Caco-2 (cell line): ENCODE measurements at regions of chr16 and their contacts with region 1.

Region 1: GRCh38 chr16:74466872-74467271 is 45.6 kb upstream of the CLEC18B start:
- DNase-seq: no peak
- H3K4me3 ChIP-seq: no peak overlapping the region
- H3K4me3 Mint-ChIP-seq: no peak overlapping the region
- H3K27ac Mint-ChIP-seq: no peak overlapping the region
- H3K4me1 ChIP-seq: peaks cover 15% of the 10 kb centered on the region
- H3K4me1 Mint-ChIP-seq: peaks cover 11% of the 10 kb centered on the region
- H3K27me3 ChIP-seq: no peaks in the 10 kb centered on the region
- H3K27me3 Mint-ChIP-seq: no peaks in the 10 kb centered on the region
- CTCF ChIP-seq: no peak

Region 2: GRCh38 chr16:74477226-74477625 is 10.4 kb after region 1 on chr16:
- CTCF ChIA-PET with region 1: no interaction called
- POLR2A ChIA-PET with region 1: no interaction called
- intact Hi-C with region 1: loop called (anchors 1 kb)
- DNase-seq: peak; percentile 80 to 90
- H3K4me3 ChIP-seq: no peak overlapping the region
- H3K4me3 Mint-ChIP-seq: peak overlapping the region; percentile 61
- H3K27ac Mint-ChIP-seq: peak overlapping the region; percentile 91
- H3K4me1 ChIP-seq: peaks cover 61% of the 10 kb centered on the region
- H3K4me1 Mint-ChIP-seq: peaks cover 60% of the 10 kb centered on the region
- H3K27me3 ChIP-seq: no peaks in the 10 kb centered on the region
- H3K27me3 Mint-ChIP-seq: no peaks in the 10 kb centered on the region
- CTCF ChIP-seq: no peak

Region 3: GRCh38 chr16:74485941-74486340 is 19.1 kb after region 1 on chr16:
- CTCF ChIA-PET with region 1: no interaction called
- POLR2A ChIA-PET with region 1: no interaction called
- intact Hi-C with region 1: loop called (anchors 2 kb)
- DNase-seq: peak in 1 of 2 experiments; percentile 79
- H3K4me3 ChIP-seq: no peak overlapping the region
- H3K4me3 Mint-ChIP-seq: peak overlapping the region; percentile 32
- H3K27ac Mint-ChIP-seq: peak overlapping the region; percentile 56
- H3K4me1 ChIP-seq: peaks cover 61% of the 10 kb centered on the region
- H3K4me1 Mint-ChIP-seq: peaks cover 53% of the 10 kb centered on the region
- H3K27me3 ChIP-seq: no peaks in the 10 kb centered on the region
- H3K27me3 Mint-ChIP-seq: no peaks in the 10 kb centered on the region
- CTCF ChIP-seq: no peak

Region 4: GRCh38 chr16:74623214-74623842 is 156.5 kb after region 1 on chr16:
- CTCF ChIA-PET with region 1: interaction called, 3 read pairs
- POLR2A ChIA-PET with region 1: no interaction called
- intact Hi-C with region 1: loop called (anchors 5 kb)
- DNase-seq: peak; percentile 21 to 48
- H3K4me3 ChIP-seq: no peak overlapping the region
- H3K4me3 Mint-ChIP-seq: no peak overlapping the region
- H3K27ac Mint-ChIP-seq: peak overlapping the region; percentile 35
- H3K4me1 ChIP-seq: no peaks in the 10 kb centered on the region
- H3K4me1 Mint-ChIP-seq: peaks cover under 1% of the 10 kb centered on the region
- H3K27me3 ChIP-seq: no peaks in the 10 kb centered on the region
- H3K27me3 Mint-ChIP-seq: no peaks in the 10 kb centered on the region
- CTCF ChIP-seq: peak; percentile 71 to 73